Activated CD8-positive, alpha-beta memory T cell treated with anti-CD3 and anti-CD28 coated beads, Interleukin-2, amount 10 ng/mL, durations not matched to agents 7 days and 5 days (primary cell): ENCODE measurements at regions of chr5 and their contacts with region 1.

Region 1: DNA sequence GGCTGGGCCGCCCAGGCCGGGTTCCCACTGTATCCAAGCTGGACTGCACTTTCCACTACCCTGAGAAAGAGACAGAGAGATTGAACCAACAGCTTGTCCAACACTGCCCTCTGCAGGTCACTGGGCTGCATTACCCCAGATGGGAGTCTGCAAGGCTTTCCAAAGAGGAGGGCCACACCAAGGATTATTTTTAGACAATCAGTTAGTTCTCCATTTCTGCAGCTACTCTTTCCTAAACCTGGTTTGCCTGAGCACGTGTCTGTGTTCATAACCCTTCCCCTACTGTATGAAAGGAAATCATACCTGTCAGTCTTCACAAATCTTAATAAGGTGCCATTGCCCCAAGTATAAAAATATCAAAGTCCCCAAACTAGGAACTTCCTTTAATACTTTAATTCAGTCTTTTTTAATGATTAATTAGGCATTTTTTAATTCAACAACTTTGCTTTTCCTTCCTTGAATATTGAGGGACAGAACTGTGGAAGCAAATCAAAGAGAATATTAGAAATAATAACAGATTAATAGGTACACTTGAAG is 13.4 kb upstream of the FGF1 start:
- DNase-seq: peak; percentile 85
- ATAC-seq: peak; percentile 90
- H3K4me3 Mint-ChIP-seq: no peak overlapping the region
- H3K27ac Mint-ChIP-seq: no peak overlapping the region
- H3K4me1 Mint-ChIP-seq: no peaks in the 10 kb centered on the region
- H3K27me3 Mint-ChIP-seq: peaks cover 18% of the 10 kb centered on the region

Region 2: DNA sequence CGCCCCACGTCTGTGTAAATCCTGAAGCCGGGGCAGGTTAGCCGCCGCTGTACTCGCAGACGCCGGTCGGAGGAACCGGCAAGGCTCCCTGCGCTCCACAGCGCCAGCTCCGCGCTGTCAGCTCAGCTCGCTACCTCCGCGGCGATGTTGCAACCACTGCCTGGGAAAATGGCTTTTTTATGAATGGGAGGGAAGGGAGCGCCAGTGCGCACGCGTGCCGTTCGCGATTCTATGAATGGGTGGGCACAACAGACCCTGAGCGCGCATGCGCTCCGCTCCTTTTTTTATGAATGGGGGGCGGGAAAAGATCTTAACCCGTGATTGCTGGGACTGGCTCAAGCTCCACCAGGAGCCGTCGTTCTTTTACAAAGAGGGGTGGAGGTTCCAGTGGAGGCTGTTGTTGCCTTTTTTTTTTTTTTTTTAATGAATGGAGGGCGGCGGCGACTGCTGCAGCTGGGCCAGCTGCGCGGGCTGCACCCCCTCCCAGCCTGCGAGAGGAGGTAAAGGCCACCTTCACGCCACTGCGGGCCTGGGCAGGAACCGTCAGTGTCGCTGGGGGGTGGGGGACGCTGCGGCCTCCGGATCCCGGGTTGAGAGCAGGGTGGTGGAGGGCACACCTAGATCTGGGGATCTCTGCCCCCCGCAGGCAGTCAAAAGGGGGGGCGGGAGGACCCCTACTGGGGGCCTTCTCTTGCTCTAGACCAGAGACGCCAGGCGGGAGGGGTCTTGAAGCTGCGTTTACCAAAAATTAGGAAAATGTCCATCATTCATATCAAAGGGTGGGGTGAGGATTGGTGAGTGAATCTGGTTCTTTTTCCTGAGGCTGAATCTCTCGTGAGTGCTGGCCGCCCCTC is 374.2 kb before region 1 on chr5 and contains the start of gene SPRY4:
- CTCF ChIA-PET with region 1: no interaction called
- DNase-seq: peak; percentile 91
- ATAC-seq: peak; percentile 87
- H3K4me3 Mint-ChIP-seq: peak within 1 kb of the TSS; percentile 70
- H3K27ac Mint-ChIP-seq: peak within 1 kb of the TSS; percentile 40
- H3K4me1 Mint-ChIP-seq: peaks cover 10% of the 10 kb centered on the region
- H3K27me3 Mint-ChIP-seq: peaks cover 73% of the 10 kb centered on the region
- total RNA-seq, gene SPRY4: 0.09 to 0.14 TPM

Region 3: GRCh38 chr5:142611154-142611553 is 88.1 kb before region 1 on chr5:
- CTCF ChIA-PET with region 1: interaction called, 16 read pairs
- DNase-seq: peak; percentile 80
- ATAC-seq: peak; percentile 91
- H3K4me3 Mint-ChIP-seq: no peak overlapping the region
- H3K27ac Mint-ChIP-seq: no peak overlapping the region
- H3K4me1 Mint-ChIP-seq: no peaks in the 10 kb centered on the region
- H3K27me3 Mint-ChIP-seq: peaks cover 45% of the 10 kb centered on the region

Region 4: DNA sequence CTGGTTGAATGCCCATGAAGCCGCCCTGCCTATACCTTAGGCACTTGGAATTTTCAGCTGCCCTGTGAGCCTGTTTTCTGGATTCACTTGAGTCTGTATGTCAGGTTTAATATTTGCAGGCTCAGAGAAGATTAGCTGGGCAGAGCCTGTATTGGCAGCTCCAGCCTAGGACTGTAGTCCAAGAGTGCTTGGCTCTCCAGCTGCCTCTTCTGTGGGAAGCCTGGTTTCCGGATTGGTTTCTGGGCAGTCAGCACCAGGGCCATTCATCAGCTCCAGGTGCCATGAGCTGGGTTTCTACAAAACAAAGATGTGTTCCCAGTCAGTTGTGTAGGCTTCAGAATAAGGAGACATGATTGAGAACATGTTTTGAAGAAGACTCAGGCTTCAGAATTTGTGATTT is 161.0 kb after region 1 on chr5:
- CTCF ChIA-PET with region 1: no interaction called
- DNase-seq: no peak
- ATAC-seq: no peak
- H3K4me3 Mint-ChIP-seq: no peak overlapping the region
- H3K27ac Mint-ChIP-seq: no peak overlapping the region
- H3K4me1 Mint-ChIP-seq: peaks cover 15% of the 10 kb centered on the region
- H3K27me3 Mint-ChIP-seq: no peaks in the 10 kb centered on the region

Region 5: GRCh38 chr5:142888469-142889085 is 189.3 kb after region 1 on chr5:
- CTCF ChIA-PET with region 1: interaction called, 11 read pairs
- DNase-seq: no peak
- ATAC-seq: no peak
- H3K4me3 Mint-ChIP-seq: no peak overlapping the region
- H3K27ac Mint-ChIP-seq: no peak overlapping the region
- H3K4me1 Mint-ChIP-seq: peaks cover 8% of the 10 kb centered on the region
- H3K27me3 Mint-ChIP-seq: no peaks in the 10 kb centered on the region

Region 6: DNA sequence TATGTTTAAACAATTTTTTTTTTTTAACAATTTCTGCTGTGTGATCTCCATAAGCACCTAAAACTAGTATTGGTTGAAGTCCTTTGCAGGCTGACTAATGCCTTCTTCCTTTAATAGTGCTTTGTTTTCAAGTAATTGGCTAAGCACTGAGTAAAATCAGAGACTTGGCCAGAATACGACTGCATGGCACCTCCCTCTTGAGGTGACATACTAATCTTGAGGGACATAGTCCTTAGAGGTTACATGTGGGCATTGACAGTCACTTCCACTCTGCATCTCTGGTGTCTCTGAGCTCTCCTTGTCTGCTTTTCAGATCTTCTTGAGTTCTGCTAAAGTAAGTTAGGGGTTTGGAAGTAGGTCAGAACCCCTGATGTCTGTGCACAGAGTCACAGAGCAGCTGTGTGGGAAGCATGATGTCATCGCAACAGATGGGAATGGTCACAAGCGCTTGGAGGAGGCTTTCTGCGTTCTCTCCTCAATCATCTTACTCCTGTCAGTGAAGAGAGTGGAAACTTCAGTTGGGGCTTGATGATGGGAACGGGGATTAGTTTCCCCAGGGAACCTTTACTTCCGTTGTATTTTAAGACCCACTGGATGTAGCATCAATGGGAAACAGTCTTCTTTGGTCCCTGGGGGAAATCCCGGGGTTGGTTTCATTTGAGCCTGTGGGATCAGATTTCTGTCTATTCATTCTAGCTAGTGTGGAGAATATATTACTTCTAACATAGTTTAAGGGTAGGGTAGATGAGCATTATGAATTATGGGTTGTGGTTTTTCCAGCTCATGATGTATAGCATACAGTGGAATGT is 207.8 kb after region 1 on chr5:
- CTCF ChIA-PET with region 1: no interaction called
- DNase-seq: no peak
- ATAC-seq: no peak
- H3K4me3 Mint-ChIP-seq: no peak overlapping the region
- H3K27ac Mint-ChIP-seq: no peak overlapping the region
- H3K4me1 Mint-ChIP-seq: no peaks in the 10 kb centered on the region
- H3K27me3 Mint-ChIP-seq: no peaks in the 10 kb centered on the region

Region 7: DNA sequence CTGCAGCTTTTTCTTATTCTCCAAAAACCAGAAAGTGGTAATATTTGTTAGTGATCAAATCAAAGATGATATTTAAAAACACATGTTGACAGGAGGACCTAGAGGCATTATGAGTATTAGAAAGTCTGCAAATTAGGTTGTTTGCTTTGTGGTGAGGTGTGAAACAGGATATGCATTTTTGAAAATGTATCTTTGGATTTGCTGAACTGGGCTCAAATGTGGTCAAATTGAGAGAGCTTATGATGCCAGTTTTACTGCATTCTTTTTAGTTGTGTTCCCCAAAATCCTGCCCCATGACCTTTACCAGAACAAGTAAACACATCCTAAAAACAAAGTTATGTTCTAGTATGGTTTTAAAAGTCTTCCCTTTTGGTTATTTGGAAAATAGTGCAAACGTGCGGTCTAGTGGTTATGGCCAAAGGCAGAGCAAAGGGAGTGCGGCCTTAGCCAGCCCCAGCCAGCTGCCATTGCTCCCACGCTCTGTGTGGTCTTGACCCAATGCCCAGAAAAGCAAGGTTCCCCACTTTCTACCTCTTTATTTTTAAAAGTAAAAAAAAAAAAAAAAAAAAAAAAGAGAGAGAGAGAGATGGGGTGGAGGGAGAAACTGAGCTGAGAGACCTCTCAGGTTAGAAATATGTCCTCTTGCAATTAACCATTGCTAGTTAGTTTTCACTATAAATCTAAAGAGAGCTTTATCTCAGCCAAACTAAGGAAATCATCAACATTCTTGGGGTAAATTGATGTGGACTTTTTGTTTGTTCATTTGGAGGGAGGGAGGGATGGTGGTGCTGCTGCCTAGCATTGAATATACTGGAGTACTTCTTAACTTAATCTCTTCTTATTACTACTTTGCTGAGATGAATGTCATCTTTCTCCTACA is 247.5 kb after region 1 on chr5:
- CTCF ChIA-PET with region 1: no interaction called
- DNase-seq: no peak
- ATAC-seq: no peak
- H3K4me3 Mint-ChIP-seq: no peak overlapping the region
- H3K27ac Mint-ChIP-seq: no peak overlapping the region
- H3K4me1 Mint-ChIP-seq: peaks cover 17% of the 10 kb centered on the region
- H3K27me3 Mint-ChIP-seq: no peaks in the 10 kb centered on the region